IMR-90 (cell line): ENCODE measurements at regions of chr15 and their contacts with region 1.

Region 1: DNA sequence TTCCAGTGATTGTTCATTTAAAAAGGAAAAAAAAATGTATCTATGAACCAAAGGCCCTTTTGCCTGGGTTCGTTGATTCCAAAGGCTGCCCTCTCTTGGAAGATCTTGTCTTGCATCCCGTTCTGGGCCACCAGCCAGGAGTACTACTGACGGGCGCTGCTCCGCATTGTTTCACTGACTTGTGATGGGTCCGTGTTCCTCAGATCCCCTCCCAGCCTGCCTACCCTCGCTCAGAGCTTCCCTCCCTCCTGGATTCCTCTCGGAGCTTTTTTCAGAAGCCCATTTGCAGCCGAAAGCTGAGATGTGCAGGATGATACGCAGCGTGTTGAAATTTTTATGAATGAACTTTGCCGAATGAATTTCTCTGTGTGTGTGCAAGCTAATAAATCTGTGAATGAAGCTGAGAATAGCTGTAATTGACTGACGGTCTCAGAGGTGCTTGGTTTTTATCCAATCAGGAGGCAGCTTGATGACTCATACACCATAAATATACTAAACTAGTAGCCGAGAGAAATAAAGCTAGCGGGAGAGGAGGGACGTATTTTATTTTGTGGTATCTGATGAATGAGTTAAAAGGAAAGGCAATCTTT is at the start of gene SHC4:
- DNase-seq: peak; percentile 86
- ATAC-seq: peak; percentile 53
- H3K4me3 ChIP-seq: peak within 1 kb of the TSS; percentile 60
- H3K27ac ChIP-seq: peak within 1 kb of the TSS; percentile 65
- H3K4me1 ChIP-seq: peaks cover 13% of the 10 kb centered on the region
- H3K27me3 ChIP-seq: no peaks in the 10 kb centered on the region
- CTCF ChIP-seq: peak; percentile 39
- POLR2A ChIP-seq: no peak
- RAD21 ChIP-seq: no peak; the same call in 1 of the 2 replicates
- total RNA-seq, gene SHC4: 2.5 and 2.7 TPM in 2 replicates

Region 2: GRCh38 chr15:48352474-48353072 is 611.0 kb before region 1 on chr15:
- CTCF ChIA-PET with region 1: no interaction called
- POLR2A ChIA-PET with region 1: no interaction called
- dilution Hi-C with region 1: no loop called
- in situ Hi-C with region 1: loop called (anchors 25 kb)
- intact Hi-C with region 1: no loop called
- DNase-seq: peak; percentile 69
- ATAC-seq: peak; percentile 87
- H3K4me3 ChIP-seq: no peak overlapping the region
- H3K27ac ChIP-seq: no peak overlapping the region
- H3K4me1 ChIP-seq: peaks cover 6% of the 10 kb centered on the region
- H3K27me3 ChIP-seq: no peaks in the 10 kb centered on the region
- CTCF ChIP-seq: peak; percentile 70
- POLR2A ChIP-seq: no peak
- RAD21 ChIP-seq: peak; percentile 59

Region 3: GRCh38 chr15:48717458-48717857 is 246.2 kb before region 1 on chr15:
- CTCF ChIA-PET with region 1: no interaction called
- POLR2A ChIA-PET with region 1: no interaction called
- dilution Hi-C with region 1: no loop called
- in situ Hi-C with region 1: no loop called
- intact Hi-C with region 1: loop called (anchors 10 kb)
- DNase-seq: peak; percentile 59
- ATAC-seq: peak; percentile 76
- H3K4me3 ChIP-seq: no peak overlapping the region
- H3K27ac ChIP-seq: no peak overlapping the region
- H3K4me1 ChIP-seq: peaks cover 11% of the 10 kb centered on the region
- H3K27me3 ChIP-seq: no peaks in the 10 kb centered on the region
- CTCF ChIP-seq: peak; percentile 62
- POLR2A ChIP-seq: no peak
- RAD21 ChIP-seq: peak; percentile 66

Region 4: GRCh38 chr15:48861813-48862431 is 101.7 kb before region 1 on chr15:
- CTCF ChIA-PET with region 1: interaction called, 36 read pairs
- POLR2A ChIA-PET with region 1: no interaction called
- dilution Hi-C with region 1: no loop called
- in situ Hi-C with region 1: no loop called
- intact Hi-C with region 1: loop called (anchors 1 kb)
- DNase-seq: peak; percentile 82
- ATAC-seq: peak; percentile 28; the same call in 1 of the 2 replicates
- H3K4me3 ChIP-seq: no peak overlapping the region
- H3K27ac ChIP-seq: no peak overlapping the region
- H3K4me1 ChIP-seq: peaks cover 24% of the 10 kb centered on the region
- H3K27me3 ChIP-seq: no peaks in the 10 kb centered on the region
- CTCF ChIP-seq: peak; percentile 96
- POLR2A ChIP-seq: no peak
- RAD21 ChIP-seq: peak; percentile 99

Region 5: DNA sequence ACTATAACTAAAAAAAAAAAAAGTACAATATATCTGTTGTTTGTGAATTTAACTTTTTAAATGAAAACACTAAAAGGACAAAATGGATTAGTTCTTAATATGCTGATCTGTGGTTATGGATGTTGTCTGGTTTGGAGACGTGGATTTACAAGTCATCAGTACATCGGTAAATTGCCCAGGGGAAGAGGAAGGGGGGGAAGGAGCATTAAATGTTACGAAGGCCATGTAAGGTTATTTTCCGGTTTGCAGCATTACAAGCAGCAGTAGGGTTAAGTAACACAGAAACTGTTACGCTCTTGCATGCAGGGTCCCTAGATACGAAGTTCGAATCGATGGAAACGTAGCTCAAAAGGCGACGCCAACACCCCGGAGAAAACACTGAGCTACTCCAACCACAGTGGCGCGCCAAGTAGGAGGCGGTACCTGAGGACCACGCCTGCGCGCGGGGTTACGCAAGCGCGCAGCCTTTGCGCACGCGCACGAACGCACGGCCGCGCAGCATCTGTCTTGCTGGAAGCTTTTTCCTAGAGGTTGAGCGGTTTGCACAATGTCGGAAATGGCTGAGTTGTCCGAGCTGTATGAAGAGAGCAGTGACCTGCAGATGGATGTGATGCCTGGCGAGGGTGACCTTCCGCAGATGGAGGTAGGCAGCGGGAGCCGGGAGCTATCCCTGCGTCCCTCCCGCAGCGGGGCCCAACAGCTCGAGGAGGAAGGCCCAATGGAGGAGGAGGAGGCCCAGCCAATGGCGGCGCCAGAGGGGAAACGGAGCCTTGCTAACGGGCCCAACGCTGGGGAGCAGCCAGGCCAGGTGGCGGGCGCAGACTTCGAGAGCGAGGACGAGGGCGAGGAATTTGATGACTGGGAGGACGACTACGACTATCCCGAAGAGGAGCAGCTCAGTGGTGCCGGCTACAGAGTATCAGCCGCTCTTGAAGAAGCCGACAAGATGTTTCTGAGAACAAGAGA is 85.7 kb before region 1 on chr15 and contains the start of gene EID1:
- CTCF ChIA-PET with region 1: interaction called, 7 read pairs
- POLR2A ChIA-PET with region 1: interaction called, 3 read pairs
- dilution Hi-C with region 1: no loop called
- in situ Hi-C with region 1: loop called (anchors 5 kb)
- intact Hi-C with region 1: no loop called
- DNase-seq: peak; percentile 95
- ATAC-seq: peak; percentile 94
- H3K4me3 ChIP-seq: peak within 1 kb of the TSS; percentile 71
- H3K27ac ChIP-seq: peak within 1 kb of the TSS; percentile 97
- H3K4me1 ChIP-seq: peaks cover 7% of the 10 kb centered on the region
- H3K27me3 ChIP-seq: no peaks in the 10 kb centered on the region
- CTCF ChIP-seq: no peak
- POLR2A ChIP-seq: peak; percentile 55
- RAD21 ChIP-seq: peak; percentile 5; the same call in 1 of the 2 replicates
- total RNA-seq, gene EID1: 147 and 308 TPM in 2 replicates

Region 6: GRCh38 chr15:48975472-48976419 is 12.1 kb after region 1 on chr15:
- CTCF ChIA-PET with region 1: interaction called, 34 read pairs
- POLR2A ChIA-PET with region 1: no interaction called
- dilution Hi-C with region 1: no loop called
- in situ Hi-C with region 1: no loop called
- intact Hi-C with region 1: no loop called
- DNase-seq: peak; percentile 69
- ATAC-seq: peak; percentile 97
- H3K4me3 ChIP-seq: peak overlapping the region; percentile 51
- H3K27ac ChIP-seq: peak overlapping the region; percentile 78
- H3K4me1 ChIP-seq: no peaks in the 10 kb centered on the region; the same call in 1 of the 2 replicates
- H3K27me3 ChIP-seq: no peaks in the 10 kb centered on the region
- CTCF ChIP-seq: peak; percentile 89
- POLR2A ChIP-seq: no peak
- RAD21 ChIP-seq: peak; percentile 73

Region 7: GRCh38 chr15:50315814-50316630 is 1352.4 kb after region 1 on chr15:
- CTCF ChIA-PET with region 1: no interaction called
- POLR2A ChIA-PET with region 1: interaction called, 17 read pairs
- dilution Hi-C with region 1: no loop called
- in situ Hi-C with region 1: no loop called
- intact Hi-C with region 1: no loop called
- DNase-seq: peak; percentile 68
- ATAC-seq: peak; percentile 81
- H3K4me3 ChIP-seq: no peak overlapping the region
- H3K27ac ChIP-seq: no peak overlapping the region
- H3K4me1 ChIP-seq: peaks cover 2% of the 10 kb centered on the region; the same call in 1 of the 2 replicates
- H3K27me3 ChIP-seq: no peaks in the 10 kb centered on the region
- CTCF ChIP-seq: peak; percentile 71
- POLR2A ChIP-seq: no peak
- RAD21 ChIP-seq: peak; percentile 77